CD8-positive, alpha-beta T cell (primary cell): ENCODE measurements at regions of chr17 and their contacts with region 1.

Region 1: GRCh38 chr17:75487351-75488070 is 27.8 kb downstream of the CASKIN2 start:
- DNase-seq: peak in 8 of 9 experiments; percentile 46 to 84 (median 62)
- ATAC-seq: peak; percentile 94
- H3K4me3 ChIP-seq: peak overlapping the region; percentile 23 to 38
- H3K4me3 Mint-ChIP-seq: peak overlapping the region; percentile 79
- H3K27ac ChIP-seq: peak overlapping the region; percentile 58 to 91
- H3K27ac Mint-ChIP-seq: peak overlapping the region; percentile 98
- H3K4me1 ChIP-seq: peaks cover 25% of the 10 kb centered on the region
- H3K4me1 Mint-ChIP-seq: peaks cover 30% of the 10 kb centered on the region
- H3K27me3 ChIP-seq: no peaks in the 10 kb centered on the region
- H3K27me3 Mint-ChIP-seq: no peaks in the 10 kb centered on the region
- CTCF ChIP-seq: no peak

Region 2: DNA sequence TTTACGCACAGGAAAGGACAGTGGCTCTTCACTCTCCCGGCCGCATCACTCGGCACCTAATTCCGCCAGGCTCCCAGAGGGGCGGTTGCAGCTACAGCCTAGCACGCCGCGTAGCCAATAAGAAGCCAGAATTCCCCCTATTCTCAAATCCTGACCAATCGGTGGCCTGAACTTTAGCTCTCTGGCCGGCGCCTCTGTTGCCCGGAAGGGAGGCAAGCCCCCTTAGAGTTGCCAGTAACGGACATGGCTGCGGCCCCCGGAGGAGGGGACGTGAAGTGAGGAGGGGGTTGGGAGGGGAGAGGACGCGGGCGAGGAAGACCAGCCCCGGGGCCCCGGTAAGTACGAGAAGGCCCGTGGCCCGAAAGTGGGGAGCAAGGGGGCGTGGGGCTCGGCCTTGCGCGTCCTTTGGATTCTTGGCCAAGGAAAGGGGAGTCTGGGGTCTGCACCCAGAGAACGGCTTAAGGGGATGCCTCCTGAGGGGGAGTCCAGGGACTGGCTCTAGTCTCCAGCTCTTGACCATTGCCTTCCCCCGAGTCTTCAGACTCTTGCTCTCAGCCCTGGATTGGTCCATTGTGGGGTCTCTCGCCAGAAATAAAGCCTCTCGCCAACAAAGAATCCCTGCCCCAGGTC is 31.0 kb before region 1 on chr17 and contains the start of gene TMEM94:
- CTCF ChIA-PET with region 1: interaction called, 5 read pairs
- POLR2A ChIA-PET with region 1: interaction called, 5 read pairs
- intact Hi-C with region 1: loop called in 1 of 2 experiments (anchors 1 kb)
- DNase-seq: peak; percentile 80 to 98 (median 91)
- ATAC-seq: peak; percentile 97
- H3K4me3 ChIP-seq: peak within 1 kb of the TSS; percentile 100
- H3K4me3 Mint-ChIP-seq: peak within 1 kb of the TSS; percentile 96
- H3K27ac ChIP-seq: peak within 1 kb of the TSS; percentile 75 to 82
- H3K27ac Mint-ChIP-seq: peak within 1 kb of the TSS; percentile 92
- H3K4me1 ChIP-seq: peaks cover 16% of the 10 kb centered on the region
- H3K4me1 Mint-ChIP-seq: peaks cover 36% of the 10 kb centered on the region
- H3K27me3 ChIP-seq: no peaks in the 10 kb centered on the region
- H3K27me3 Mint-ChIP-seq: peaks cover 3% of the 10 kb centered on the region
- CTCF ChIP-seq: no peak
- total RNA-seq, gene TMEM94: 44.8 to 46.5 TPM

Region 3: GRCh38 chr17:75531730-75532090 is 44.2 kb after region 1 on chr17:
- CTCF ChIA-PET with region 1: no interaction called
- POLR2A ChIA-PET with region 1: no interaction called
- intact Hi-C with region 1: no loop called
- DNase-seq: no peak
- ATAC-seq: no peak
- H3K4me3 ChIP-seq: no peak overlapping the region
- H3K4me3 Mint-ChIP-seq: no peak overlapping the region
- H3K27ac ChIP-seq: no peak overlapping the region
- H3K27ac Mint-ChIP-seq: no peak overlapping the region
- H3K4me1 ChIP-seq: peaks cover 23% of the 10 kb centered on the region
- H3K4me1 Mint-ChIP-seq: peaks cover 25% of the 10 kb centered on the region
- H3K27me3 ChIP-seq: no peaks in the 10 kb centered on the region
- H3K27me3 Mint-ChIP-seq: no peaks in the 10 kb centered on the region
- CTCF ChIP-seq: no peak